Activated B cell treated with CpG ODN at 0.5 μM for 24 hours (primary cell): ENCODE measurements at regions of chr17 and their contacts with region 1.

Region 1: GRCh38 chr17:44210342-44211192 is 8.9 kb downstream of the UBTF start:
- DNase-seq: peak; percentile 93
- ATAC-seq: peak; percentile 98
- H3K4me3 Mint-ChIP-seq: peak overlapping the region; percentile 52
- H3K27ac Mint-ChIP-seq: peak overlapping the region; percentile 74
- H3K4me1 Mint-ChIP-seq: peaks cover 55% of the 10 kb centered on the region
- H3K27me3 Mint-ChIP-seq: no peaks in the 10 kb centered on the region
- CTCF ChIP-seq: peak; percentile 73

Region 2: DNA sequence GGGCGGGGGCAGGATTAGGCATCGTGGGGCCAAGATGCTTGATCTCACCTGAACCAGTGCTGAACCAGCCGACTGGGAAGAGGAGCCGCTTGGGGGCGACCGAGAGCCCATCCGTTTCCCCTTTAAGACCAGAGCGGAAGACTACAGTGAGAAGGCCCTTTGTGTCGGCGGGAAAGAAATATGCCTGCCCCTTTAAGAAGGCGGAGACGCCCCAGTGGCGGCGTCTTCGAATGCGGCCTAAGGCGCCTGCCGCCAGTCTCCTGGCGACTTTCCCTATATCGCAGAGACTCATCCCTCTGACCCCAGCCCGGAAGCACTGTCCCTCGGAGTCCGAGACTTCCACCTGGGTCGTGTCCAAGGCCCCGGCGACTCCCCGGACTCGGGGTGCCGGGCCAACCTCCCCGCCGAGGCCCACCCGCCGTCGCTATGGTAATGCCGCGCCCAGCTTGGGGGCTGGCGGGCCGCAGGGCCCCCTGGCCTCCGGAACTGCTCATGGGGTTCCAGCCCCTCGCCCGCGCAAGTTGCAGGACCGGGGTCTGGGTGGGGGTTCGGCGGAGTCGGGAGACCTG is 68.8 kb before region 1 on chr17 and contains the start of gene HROB:
- CTCF ChIA-PET with region 1: no interaction called
- POLR2A ChIA-PET with region 1: no interaction called
- intact Hi-C with region 1: loop called (anchors 2 kb)
- DNase-seq: peak; percentile 96
- ATAC-seq: peak; percentile 98
- H3K4me3 Mint-ChIP-seq: peak within 1 kb of the TSS; percentile 84
- H3K27ac Mint-ChIP-seq: peak within 1 kb of the TSS; percentile 70
- H3K4me1 Mint-ChIP-seq: peaks cover 15% of the 10 kb centered on the region
- H3K27me3 Mint-ChIP-seq: peaks cover 8% of the 10 kb centered on the region
- CTCF ChIP-seq: no peak
- total RNA-seq, gene HROB: 2.2 and 5.0 TPM in 2 replicates

Region 3: GRCh38 chr17:44331249-44331760 is 120.7 kb after region 1 on chr17:
- CTCF ChIA-PET with region 1: interaction called, 45 read pairs
- POLR2A ChIA-PET with region 1: interaction called, 237 read pairs
- intact Hi-C with region 1: loop called (anchors 1 kb)
- DNase-seq: no peak
- ATAC-seq: peak; percentile 32
- H3K4me3 Mint-ChIP-seq: no peak overlapping the region
- H3K27ac Mint-ChIP-seq: no peak overlapping the region
- H3K4me1 Mint-ChIP-seq: peaks cover 34% of the 10 kb centered on the region
- H3K27me3 Mint-ChIP-seq: no peaks in the 10 kb centered on the region
- CTCF ChIP-seq: peak; percentile 88

Region 4: DNA sequence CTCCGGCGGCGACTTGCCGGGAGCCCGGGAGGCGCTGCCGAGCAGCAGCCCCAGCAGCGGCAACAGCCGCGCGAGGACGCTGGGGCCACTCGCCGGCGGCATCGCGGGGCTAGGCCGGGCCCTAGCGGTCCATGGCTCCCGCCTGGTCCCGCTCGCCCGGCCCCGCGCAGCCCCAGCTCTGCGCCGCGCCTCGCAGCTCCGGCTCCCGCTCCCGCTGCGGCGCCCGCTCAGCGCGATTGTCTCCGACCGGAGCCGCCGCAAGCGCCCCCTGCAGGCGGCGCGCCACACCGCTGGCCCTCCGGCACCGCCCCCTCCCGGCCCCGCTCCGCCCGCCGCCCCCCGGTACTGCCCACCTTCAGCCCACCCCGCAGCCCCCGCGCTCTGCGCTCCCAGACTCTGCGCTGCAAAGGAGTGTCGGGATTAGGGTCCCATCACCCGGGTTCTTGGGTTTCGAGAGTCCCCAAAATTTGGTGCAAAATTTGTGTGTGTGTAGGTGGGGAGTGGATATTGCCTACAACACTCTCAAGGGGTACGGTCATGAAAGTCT is 153.1 kb after region 1 on chr17 and contains the start of gene FAM171A2:
- CTCF ChIA-PET with region 1: interaction called, 108 read pairs
- POLR2A ChIA-PET with region 1: interaction called, 3 read pairs
- intact Hi-C with region 1: no loop called
- DNase-seq: peak; percentile 78
- ATAC-seq: peak; percentile 92
- H3K4me3 Mint-ChIP-seq: peak within 1 kb of the TSS; percentile 79
- H3K27ac Mint-ChIP-seq: no peak within 1 kb of the TSS
- H3K4me1 Mint-ChIP-seq: peaks cover 11% of the 10 kb centered on the region
- H3K27me3 Mint-ChIP-seq: peaks cover 23% of the 10 kb centered on the region
- CTCF ChIP-seq: peak; percentile 55
- total RNA-seq, gene FAM171A2: 0.49 and 0.75 TPM in 2 replicates